Activated B cell treated with CpG ODN at 0.5 μM for 24 hours (primary cell): ENCODE measurements at regions of chrX and their contacts with region 1.

Region 1: GRCh38 chrX:68828740-68829552 is at the start of gene EFNB1:
- DNase-seq: peak; percentile 69
- ATAC-seq: peak; percentile 94
- H3K4me3 Mint-ChIP-seq: peak within 1 kb of the TSS; percentile 91
- H3K27ac Mint-ChIP-seq: peak within 1 kb of the TSS; percentile 76
- H3K4me1 Mint-ChIP-seq: peaks cover 20% of the 10 kb centered on the region
- H3K27me3 Mint-ChIP-seq: peaks cover 2% of the 10 kb centered on the region
- CTCF ChIP-seq: no peak
- total RNA-seq, gene EFNB1: 2.0 and 2.3 TPM in 2 replicates

Region 2: DNA sequence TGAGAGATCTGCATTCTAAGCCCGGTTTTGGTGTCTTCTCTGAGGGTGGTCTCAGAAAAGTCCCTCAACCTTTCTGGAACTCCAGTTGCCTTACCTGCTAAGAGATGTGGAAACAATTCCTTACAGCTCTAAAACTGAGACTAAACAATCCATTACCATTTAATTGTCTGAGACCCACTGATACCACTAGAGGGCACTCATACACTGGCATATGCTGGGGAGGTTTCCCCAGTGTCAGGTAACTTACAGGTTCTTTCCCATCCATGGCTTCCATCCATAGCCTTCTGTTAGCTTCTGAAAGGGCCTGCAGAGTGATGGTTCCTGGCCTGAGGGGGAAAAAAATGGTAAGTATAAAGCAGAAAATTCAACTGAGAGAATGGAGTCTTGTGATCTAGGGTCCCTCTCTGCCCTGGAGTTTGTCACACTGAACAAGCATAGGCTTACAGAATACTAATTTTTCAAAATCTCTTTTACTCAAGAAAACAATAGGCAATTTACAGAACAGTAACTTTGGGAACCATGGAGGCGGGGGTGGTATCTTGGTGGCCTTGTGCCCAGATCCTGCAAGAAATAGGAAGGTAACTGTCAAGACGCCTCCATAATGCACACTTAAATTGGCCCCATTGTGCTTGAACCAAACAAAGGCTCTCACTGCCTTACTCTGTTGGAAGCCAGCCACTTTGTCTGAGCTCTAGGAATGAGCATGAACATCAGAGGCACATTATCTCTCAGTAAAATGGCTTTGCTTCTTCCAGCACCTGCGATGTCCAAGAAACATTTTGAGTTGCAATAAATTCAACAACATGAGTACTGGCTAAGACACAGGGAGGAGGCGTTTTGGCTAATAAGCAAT is 631.8 kb before region 1 on chrX:
- CTCF ChIA-PET with region 1: no interaction called
- POLR2A ChIA-PET with region 1: no interaction called
- intact Hi-C with region 1: loop called (anchors 5 kb)
- DNase-seq: no peak
- ATAC-seq: no peak
- H3K4me3 Mint-ChIP-seq: no peak overlapping the region
- H3K27ac Mint-ChIP-seq: no peak overlapping the region
- H3K4me1 Mint-ChIP-seq: no peaks in the 10 kb centered on the region
- H3K27me3 Mint-ChIP-seq: no peaks in the 10 kb centered on the region
- CTCF ChIP-seq: no peak

Region 3: DNA sequence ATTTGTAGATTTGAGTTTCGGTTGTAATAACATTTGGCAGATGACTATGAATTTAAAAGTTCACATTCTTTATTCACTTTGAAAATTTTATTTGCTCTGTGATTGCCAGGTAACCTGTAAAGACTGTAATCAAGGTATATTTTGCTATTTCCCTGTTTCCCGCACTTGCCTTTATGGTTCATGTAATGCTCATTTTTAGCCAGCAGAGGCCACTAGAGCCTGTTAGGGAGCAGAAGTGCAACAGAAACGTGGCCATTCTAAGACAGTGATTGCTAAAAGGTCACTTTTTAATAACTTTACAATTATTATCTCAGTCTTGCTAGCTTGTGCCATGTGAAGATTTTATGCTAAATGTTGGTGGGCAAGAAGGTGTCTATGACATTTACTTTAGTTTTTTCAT is 317.7 kb before region 1 on chrX:
- CTCF ChIA-PET with region 1: interaction called, 3 read pairs
- POLR2A ChIA-PET with region 1: no interaction called
- intact Hi-C with region 1: loop called (anchors 5 kb)
- DNase-seq: no peak
- ATAC-seq: peak; percentile 68
- H3K4me3 Mint-ChIP-seq: no peak overlapping the region
- H3K27ac Mint-ChIP-seq: no peak overlapping the region
- H3K4me1 Mint-ChIP-seq: peaks cover 20% of the 10 kb centered on the region
- H3K27me3 Mint-ChIP-seq: no peaks in the 10 kb centered on the region
- CTCF ChIP-seq: peak; percentile 16

Region 4: GRCh38 chrX:68853665-68854251 is 24.8 kb after region 1 on chrX:
- CTCF ChIA-PET with region 1: no interaction called
- POLR2A ChIA-PET with region 1: no interaction called
- intact Hi-C with region 1: no loop called
- DNase-seq: no peak
- ATAC-seq: no peak
- H3K4me3 Mint-ChIP-seq: no peak overlapping the region
- H3K27ac Mint-ChIP-seq: no peak overlapping the region
- H3K4me1 Mint-ChIP-seq: no peaks in the 10 kb centered on the region
- H3K27me3 Mint-ChIP-seq: no peaks in the 10 kb centered on the region
- CTCF ChIP-seq: no peak

Region 5: DNA sequence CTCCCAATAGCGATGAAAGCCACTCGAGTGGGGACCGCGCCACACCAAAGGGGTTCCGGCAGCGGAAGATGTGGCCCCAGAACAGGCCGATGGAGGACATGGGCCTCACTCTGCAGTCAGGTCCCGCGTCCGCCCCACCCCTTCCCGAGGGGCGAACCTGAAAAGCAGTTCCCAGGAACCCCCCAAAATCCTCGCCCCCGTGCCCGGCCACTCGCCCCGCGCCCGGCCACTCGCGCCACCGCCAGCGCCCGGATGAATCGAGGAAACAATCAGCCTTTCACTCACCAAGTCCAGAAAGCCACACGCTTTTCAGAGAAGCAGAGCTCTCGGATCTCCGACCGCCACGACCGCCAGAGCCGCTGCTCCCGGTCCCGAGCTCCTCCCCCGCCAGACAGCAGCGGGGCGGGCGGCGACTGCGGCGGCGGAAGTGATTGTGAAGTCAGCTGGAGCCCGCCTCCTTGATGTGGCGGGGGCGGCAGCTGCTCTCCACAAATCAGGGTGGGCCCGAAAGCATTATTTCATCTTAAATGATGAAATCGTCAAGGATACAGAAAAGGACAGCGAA is 336.2 kb after region 1 on chrX and contains the start of gene PJA1:
- CTCF ChIA-PET with region 1: interaction called, 8 read pairs
- POLR2A ChIA-PET with region 1: interaction called, 11 read pairs
- intact Hi-C with region 1: loop called (anchors 1 kb)
- DNase-seq: peak; percentile 60
- ATAC-seq: peak; percentile 93
- H3K4me3 Mint-ChIP-seq: peak within 1 kb of the TSS; percentile 90
- H3K27ac Mint-ChIP-seq: peak within 1 kb of the TSS; percentile 85
- H3K4me1 Mint-ChIP-seq: peaks cover 21% of the 10 kb centered on the region
- H3K27me3 Mint-ChIP-seq: no peaks in the 10 kb centered on the region
- CTCF ChIP-seq: no peak
- total RNA-seq, gene PJA1: 16.9 and 18.6 TPM in 2 replicates

Region 6: GRCh38 chrX:69285881-69286564 is 457.1 kb after region 1 on chrX:
- CTCF ChIA-PET with region 1: interaction called, 16 read pairs
- POLR2A ChIA-PET with region 1: no interaction called
- intact Hi-C with region 1: loop called (anchors 1 kb)
- DNase-seq: peak; percentile 42
- ATAC-seq: peak; percentile 54
- H3K4me3 Mint-ChIP-seq: peak overlapping the region; percentile 52
- H3K27ac Mint-ChIP-seq: no peak overlapping the region
- H3K4me1 Mint-ChIP-seq: peaks cover 2% of the 10 kb centered on the region
- H3K27me3 Mint-ChIP-seq: no peaks in the 10 kb centered on the region
- CTCF ChIP-seq: no peak

Region 7: DNA sequence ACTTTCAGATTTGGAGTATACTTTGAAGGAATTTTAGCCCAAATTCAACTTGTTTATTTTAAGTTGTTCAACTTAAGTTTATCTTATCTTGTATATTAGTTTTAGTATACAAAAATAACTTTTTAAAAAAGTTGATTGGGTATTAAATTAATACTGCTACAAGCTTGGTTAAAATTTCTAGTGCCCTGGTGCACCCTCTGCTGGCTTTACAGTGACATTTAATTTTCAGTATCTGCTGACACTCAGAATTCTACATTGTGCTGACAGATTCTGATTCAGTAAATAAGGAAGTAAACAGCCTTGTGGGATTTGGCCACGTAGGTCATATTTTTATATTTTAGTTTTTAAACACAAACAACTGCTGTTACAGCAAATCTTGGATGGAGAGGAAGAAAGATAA is 789.9 kb after region 1 on chrX:
- CTCF ChIA-PET with region 1: no interaction called
- POLR2A ChIA-PET with region 1: no interaction called
- intact Hi-C with region 1: loop called (anchors 2 kb)
- DNase-seq: no peak
- ATAC-seq: no peak
- H3K4me3 Mint-ChIP-seq: no peak overlapping the region
- H3K27ac Mint-ChIP-seq: no peak overlapping the region
- H3K4me1 Mint-ChIP-seq: peaks cover 9% of the 10 kb centered on the region
- H3K27me3 Mint-ChIP-seq: peaks cover 9% of the 10 kb centered on the region
- CTCF ChIP-seq: no peak

Region 8: GRCh38 chrX:70133303-70134115 is 1304.6 kb after region 1 on chrX and contains the start of gene IGBP1:
- CTCF ChIA-PET with region 1: no interaction called
- POLR2A ChIA-PET with region 1: interaction called, 7 read pairs
- intact Hi-C with region 1: loop called (anchors 1 kb)
- DNase-seq: peak; percentile 57
- ATAC-seq: peak; percentile 82
- H3K4me3 Mint-ChIP-seq: peak within 1 kb of the TSS; percentile 99
- H3K27ac Mint-ChIP-seq: peak within 1 kb of the TSS; percentile 96
- H3K4me1 Mint-ChIP-seq: peaks cover 29% of the 10 kb centered on the region
- H3K27me3 Mint-ChIP-seq: no peaks in the 10 kb centered on the region
- CTCF ChIP-seq: no peak
- total RNA-seq, gene IGBP1: 51.6 and 52.7 TPM in 2 replicates